ENCODE measurements at regions of chr4 and their contacts with region 1.

Region 1: DNA sequence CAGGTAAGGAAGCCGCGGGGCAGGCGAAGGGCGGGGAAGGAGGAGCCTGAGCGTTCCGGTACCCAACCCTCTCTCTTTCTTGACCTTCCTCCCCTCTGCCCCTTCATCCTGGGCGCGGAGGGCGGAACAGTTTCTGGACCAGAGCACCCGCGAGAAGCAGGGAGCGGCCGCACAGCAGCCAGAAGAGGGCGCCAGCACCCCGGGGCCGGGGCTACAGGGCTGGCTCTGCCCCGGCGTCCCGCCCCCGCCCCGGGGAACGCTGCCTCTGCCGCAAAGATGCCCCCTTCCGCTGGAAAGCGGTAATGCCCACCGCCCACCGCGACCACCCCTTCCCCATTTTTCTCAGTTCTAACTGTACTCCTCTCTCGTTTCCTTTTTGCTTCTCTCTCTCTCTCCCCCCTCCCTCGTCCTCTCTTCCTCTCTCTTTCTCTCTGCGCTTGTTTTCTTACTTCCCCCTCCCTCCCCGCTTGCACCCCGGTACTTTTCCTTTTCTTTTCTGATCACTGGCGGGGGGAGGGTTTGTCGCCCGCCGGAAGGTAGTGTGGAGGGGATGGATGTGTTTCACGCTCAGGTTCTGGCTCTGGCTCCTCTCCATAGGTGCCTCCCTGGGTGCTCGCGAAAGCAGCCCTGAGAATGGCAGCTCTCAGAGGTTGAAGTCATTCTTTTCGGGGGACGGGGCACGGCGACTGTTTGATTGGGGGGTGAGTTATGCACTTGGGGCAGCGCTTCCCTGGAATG is 13.1 kb upstream of the PRDM8 start:
- DNase-seq: peak; percentile 48
- ATAC-seq: peak; percentile 99
- H3K4me3 ChIP-seq: peak overlapping the region; percentile 59 to 73
- H3K27ac ChIP-seq: no peak overlapping the region
- H3K4me1 ChIP-seq: peaks cover 0 to 13% of the 10 kb centered on the region in 2 experiments; a peak in 1 of 4 replicates
- H3K27me3 ChIP-seq: no peaks in the 10 kb centered on the region
- CTCF ChIP-seq: peak; percentile 76 to 96 (median 81)
- POLR2A ChIP-seq: no peak
- RAD21 ChIP-seq: peak; percentile 79

Region 2: DNA sequence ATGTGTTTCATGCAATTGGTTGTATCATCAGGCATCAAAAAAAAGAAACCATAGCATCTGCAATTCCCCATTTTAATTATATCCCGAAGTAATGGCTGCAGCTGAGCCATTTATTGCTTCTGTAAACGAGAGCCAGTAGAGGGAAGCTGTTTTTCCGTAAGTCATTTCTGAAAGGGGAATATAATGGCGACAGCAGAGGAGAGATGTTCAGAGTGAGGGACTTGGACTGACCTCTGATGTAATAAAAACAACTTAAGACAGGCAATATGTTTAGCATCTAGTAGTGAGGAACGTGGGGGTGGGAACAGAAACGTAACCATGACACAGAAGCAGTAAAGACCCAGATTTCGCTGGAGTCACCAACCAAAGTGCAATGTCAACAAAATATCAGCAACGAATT is 826.9 kb before region 1 on chr4:
- CTCF ChIA-PET with region 1: no interaction called
- POLR2A ChIA-PET with region 1: no interaction called
- RAD21 ChIA-PET with region 1: no interaction called
- intact Hi-C with region 1: no loop called
- DNase-seq: no peak
- ATAC-seq: no peak
- H3K4me3 ChIP-seq: no peak overlapping the region
- H3K27ac ChIP-seq: no peak overlapping the region
- H3K4me1 ChIP-seq: no peaks in the 10 kb centered on the region
- H3K27me3 ChIP-seq: no peaks in the 10 kb centered on the region; the same call in 1 of the 2 replicates
- CTCF ChIP-seq: no peak
- POLR2A ChIP-seq: no peak
- RAD21 ChIP-seq: no peak

Region 3: GRCh38 chr4:79917246-79917645 is 267.0 kb before region 1 on chr4:
- CTCF ChIA-PET with region 1: no interaction called
- POLR2A ChIA-PET with region 1: no interaction called
- RAD21 ChIA-PET with region 1: no interaction called
- intact Hi-C with region 1: loop called (anchors 1 kb)
- DNase-seq: peak; percentile 42
- ATAC-seq: peak; percentile 80
- H3K4me3 ChIP-seq: no peak overlapping the region
- H3K27ac ChIP-seq: no peak overlapping the region
- H3K4me1 ChIP-seq: no peaks in the 10 kb centered on the region
- H3K27me3 ChIP-seq: no peaks in the 10 kb centered on the region
- CTCF ChIP-seq: peak; percentile 52 to 79 (median 75); a peak in 5 of 6 replicates
- POLR2A ChIP-seq: no peak
- RAD21 ChIP-seq: peak; percentile 52

Region 4: DNA sequence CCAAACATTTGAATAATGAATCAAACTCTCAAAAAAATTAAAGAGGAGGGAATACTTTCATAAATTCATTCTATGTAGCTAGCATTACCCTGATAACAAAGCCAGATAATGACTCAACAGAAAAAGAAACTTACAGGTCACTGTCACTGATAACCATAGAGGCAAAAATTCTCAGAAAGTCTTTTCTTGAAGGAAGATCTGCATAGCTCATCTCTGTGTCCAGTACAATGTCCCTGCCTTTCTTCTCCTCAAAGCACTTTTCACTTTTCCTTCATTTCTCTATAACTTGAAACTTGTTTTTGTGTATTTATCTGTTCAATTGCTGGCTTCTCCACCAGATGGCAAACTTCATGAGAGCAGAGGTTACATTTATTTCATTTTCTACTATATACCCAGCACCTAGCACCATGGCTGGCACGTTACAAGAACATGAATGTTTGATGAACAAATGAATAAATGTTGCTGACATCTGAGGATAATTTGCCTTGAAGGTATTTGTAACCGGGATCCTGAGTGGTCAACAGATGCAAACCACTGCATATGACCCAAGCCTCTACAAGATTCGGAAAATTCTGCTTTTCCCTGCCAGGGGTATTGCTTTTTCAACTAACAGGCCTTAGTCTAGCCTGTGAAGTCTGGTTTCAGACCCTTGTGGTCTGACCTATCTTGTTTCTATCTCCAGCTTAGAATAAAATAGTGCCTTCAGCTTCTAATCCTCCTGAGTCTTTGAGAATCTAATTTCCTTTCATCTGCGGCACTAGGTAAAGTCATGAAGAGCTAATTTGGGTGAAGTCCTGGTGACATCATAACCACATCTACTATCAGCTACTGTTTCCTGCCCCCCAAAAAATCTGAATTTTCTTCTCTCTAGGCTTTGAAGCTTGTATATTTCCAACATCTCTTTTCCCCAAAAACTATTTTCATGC is 58.7 kb before region 1 on chr4:
- CTCF ChIA-PET with region 1: no interaction called
- POLR2A ChIA-PET with region 1: no interaction called
- RAD21 ChIA-PET with region 1: no interaction called
- intact Hi-C with region 1: loop called (anchors 5 kb)
- DNase-seq: peak; percentile 18
- ATAC-seq: peak; percentile 70
- H3K4me3 ChIP-seq: no peak overlapping the region
- H3K27ac ChIP-seq: no peak overlapping the region
- H3K4me1 ChIP-seq: peaks cover 26 to 54% of the 10 kb centered on the region in 2 experiments
- H3K27me3 ChIP-seq: no peaks in the 10 kb centered on the region
- CTCF ChIP-seq: peak; percentile 59 to 75 (median 71); a peak in 5 of 6 replicates
- POLR2A ChIP-seq: no peak
- RAD21 ChIP-seq: peak; percentile 61

Region 5: DNA sequence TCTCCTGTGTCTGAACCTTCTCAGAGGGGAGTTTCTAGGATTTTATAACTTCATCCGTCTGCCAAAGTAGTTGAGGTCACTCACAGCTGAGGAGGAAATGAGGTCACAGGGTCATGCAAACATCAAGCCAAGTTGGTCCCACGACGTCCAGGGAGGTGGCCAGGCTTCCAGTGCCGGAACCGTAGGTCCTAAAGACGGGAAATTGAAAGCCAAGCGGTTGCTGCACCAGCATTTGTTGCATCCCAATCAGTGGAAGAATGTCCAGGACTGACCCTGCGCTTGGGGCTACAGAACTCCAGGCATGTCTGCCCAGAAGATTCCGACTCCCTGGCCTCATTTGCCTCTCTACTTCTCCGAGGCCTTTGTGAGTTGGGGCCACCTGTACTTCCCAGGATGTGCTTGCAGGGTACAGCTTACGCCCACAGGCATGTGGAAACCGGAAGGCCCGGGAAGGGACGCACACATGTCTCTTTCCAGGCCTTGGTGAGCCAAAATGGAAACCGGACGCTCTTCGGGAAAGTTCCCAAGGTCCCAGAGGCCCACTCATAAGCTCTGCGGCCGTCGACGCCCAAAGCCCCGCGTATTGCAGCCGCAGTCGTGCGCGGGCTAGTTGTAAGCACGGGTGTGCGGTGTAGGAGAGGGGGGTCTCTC is 22.4 kb after region 1 on chr4:
- CTCF ChIA-PET with region 1: no interaction called
- POLR2A ChIA-PET with region 1: no interaction called
- RAD21 ChIA-PET with region 1: no interaction called
- intact Hi-C with region 1: no loop called
- DNase-seq: no peak
- ATAC-seq: no peak
- H3K4me3 ChIP-seq: no peak overlapping the region
- H3K27ac ChIP-seq: no peak overlapping the region
- H3K4me1 ChIP-seq: peaks cover 2 to 9% of the 10 kb centered on the region in 2 experiments; a peak in 3 of 4 replicates
- H3K27me3 ChIP-seq: no peaks in the 10 kb centered on the region
- CTCF ChIP-seq: no peak
- POLR2A ChIP-seq: no peak
- RAD21 ChIP-seq: no peak

Region 6: DNA sequence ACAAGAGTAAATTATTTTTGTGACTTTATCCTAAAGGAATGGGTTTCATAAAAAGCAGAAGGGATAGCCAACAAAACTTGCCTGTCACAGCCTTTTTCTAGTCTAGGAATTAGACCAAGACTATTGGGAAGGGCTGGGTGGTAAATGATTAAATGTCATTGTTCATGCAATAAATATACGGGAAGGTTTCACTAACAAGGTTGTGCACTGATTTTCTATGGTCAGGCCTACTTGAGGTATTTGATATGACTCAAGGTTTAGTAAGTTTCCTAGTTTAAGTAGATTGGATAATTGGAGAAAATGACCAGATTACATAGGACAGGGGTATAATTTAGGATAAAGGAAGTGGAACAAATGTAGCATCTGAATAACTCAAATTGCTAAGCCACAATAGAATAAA is 597.2 kb after region 1 on chr4:
- CTCF ChIA-PET with region 1: no interaction called
- POLR2A ChIA-PET with region 1: no interaction called
- RAD21 ChIA-PET with region 1: no interaction called
- intact Hi-C with region 1: no loop called
- DNase-seq: no peak
- ATAC-seq: no peak
- H3K4me3 ChIP-seq: no peak overlapping the region
- H3K27ac ChIP-seq: no peak overlapping the region
- H3K4me1 ChIP-seq: no peaks in the 10 kb centered on the region
- H3K27me3 ChIP-seq: peaks cover 3% of the 10 kb centered on the region; the same call in 1 of the 2 replicates
- CTCF ChIP-seq: no peak
- POLR2A ChIP-seq: no peak
- RAD21 ChIP-seq: no peak

Measured in HCT116 (cell line).